Naive thymus-derived CD4-positive, alpha-beta T cell (primary cell): ENCODE measurements at regions of chr1 and their contacts with region 1.

Region 1: GRCh38 chr1:1019122-1019999 is 559 bp upstream of the AGRN start:
- DNase-seq: peak; percentile 69 to 90 (median 82)
- ATAC-seq: peak; percentile 93
- H3K4me3 ChIP-seq: peak overlapping the region; percentile 11
- H3K4me3 Mint-ChIP-seq: peak overlapping the region in 9 of 10 donors; percentile 48 to 80 (median 68)
- H3K27ac ChIP-seq: peak overlapping the region; percentile 27
- H3K27ac Mint-ChIP-seq: peak overlapping the region in 4 of 9 donors; percentile 40 to 65 (median 55)
- H3K4me1 ChIP-seq: peaks cover 4 to 10% of the 10 kb centered on the region in 2 donors
- H3K4me1 Mint-ChIP-seq: peaks cover 9 to 26% (median 15%) of the 10 kb centered on the region in 7 donors
- H3K27me3 ChIP-seq: no peaks in the 10 kb centered on the region
- H3K27me3 Mint-ChIP-seq: peaks cover 0 to 17% (median 0%) of the 10 kb centered on the region in 5 donors

Region 2: DNA sequence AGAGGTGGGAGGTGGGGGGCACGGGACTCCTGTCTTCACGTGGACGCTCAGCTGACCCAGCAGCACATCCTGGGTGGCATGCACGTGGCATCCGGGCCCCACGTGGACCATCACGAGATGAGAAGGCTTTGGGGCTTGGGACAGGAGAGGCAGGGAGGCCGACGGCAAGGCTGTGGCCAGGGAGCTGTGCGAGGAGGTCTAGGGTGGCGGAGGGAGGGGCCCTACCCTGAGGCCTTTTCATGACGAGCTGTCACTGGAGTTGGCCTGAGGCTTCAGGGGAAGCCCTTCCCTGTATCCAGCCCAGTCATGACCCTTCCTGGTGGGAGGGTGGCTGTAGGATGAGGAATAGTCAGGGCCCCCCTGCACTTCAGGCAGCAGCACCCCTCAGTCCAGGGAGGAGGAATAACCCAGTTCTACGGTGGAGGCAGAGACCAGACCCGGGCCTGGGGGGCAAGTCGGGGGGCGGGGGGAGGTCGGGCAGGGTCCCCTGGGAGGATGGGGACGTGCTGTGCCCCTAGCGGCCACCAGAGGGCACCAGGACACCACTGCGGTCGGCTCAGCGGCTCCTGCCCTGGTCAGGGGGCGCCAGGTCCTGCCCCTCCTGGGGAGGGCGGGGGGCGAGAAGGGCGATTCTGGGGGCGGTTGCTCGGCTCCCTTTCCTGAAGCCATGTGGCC is 35.4 kb before region 1 on chr1:
- CTCF ChIA-PET with region 1: interaction called, 6 read pairs
- POLR2A ChIA-PET with region 1: no interaction called
- intact Hi-C with region 1: loop called in 1 of 2 experiments (anchors 1 kb)
- DNase-seq: peak in 7 of 9 donors; percentile 47 to 71 (median 62)
- ATAC-seq: peak; percentile 85
- H3K4me3 ChIP-seq: no peak overlapping the region
- H3K4me3 Mint-ChIP-seq: no peak overlapping the region
- H3K27ac ChIP-seq: no peak overlapping the region
- H3K27ac Mint-ChIP-seq: no peak overlapping the region
- H3K4me1 ChIP-seq: no peaks in the 10 kb centered on the region
- H3K4me1 Mint-ChIP-seq: peaks cover 0 to 2% (median 0%) of the 10 kb centered on the region in 7 donors
- H3K27me3 ChIP-seq: no peaks in the 10 kb centered on the region
- H3K27me3 Mint-ChIP-seq: peaks cover 7 to 38% (median 26%) of the 10 kb centered on the region in 5 donors

Region 3: DNA sequence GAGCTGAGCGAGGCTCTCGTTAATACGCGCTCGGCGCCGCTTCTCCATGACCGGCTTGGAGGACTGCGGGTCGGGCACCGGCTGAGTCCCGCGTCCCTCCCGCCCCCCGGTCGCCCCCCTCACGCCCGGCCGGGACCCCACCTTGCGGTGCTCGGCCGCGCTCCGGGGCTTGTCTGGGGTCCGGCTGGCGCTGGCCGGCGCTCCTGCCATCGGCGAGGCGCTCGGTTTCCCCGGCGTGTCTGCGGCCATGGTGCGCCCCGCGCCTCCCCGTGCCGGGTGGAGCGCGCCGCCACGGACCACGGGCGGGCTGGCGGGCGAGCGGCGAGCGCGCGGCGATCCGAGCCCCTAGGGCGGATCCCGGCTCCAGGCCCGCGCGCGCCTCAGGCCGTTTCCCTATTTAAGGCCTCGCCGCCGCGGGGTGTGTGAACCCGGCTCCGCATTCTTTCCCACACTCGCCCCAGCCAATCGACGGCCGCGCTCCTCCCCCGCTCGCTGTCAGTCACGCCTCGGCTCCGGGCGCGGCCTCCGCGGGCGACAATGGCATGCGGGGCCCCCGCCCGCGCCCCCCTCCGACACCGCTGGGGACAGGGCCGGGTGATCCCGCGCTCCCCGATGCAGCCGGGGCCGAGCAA is 19.5 kb before region 1 on chr1 and contains the start of gene HES4:
- CTCF ChIA-PET with region 1: interaction called, 3 read pairs
- POLR2A ChIA-PET with region 1: interaction called, 10 read pairs
- intact Hi-C with region 1: loop called in 1 of 2 experiments (anchors 1 kb)
- DNase-seq: peak; percentile 44 to 76 (median 60)
- ATAC-seq: peak; percentile 67
- H3K4me3 ChIP-seq: peak within 1 kb of the TSS; percentile 42
- H3K4me3 Mint-ChIP-seq: peak within 1 kb of the TSS; percentile 64 to 87 (median 80)
- H3K27ac ChIP-seq: peak within 1 kb of the TSS; percentile 64
- H3K27ac Mint-ChIP-seq: peak within 1 kb of the TSS in 7 of 9 donors; percentile 46 to 96 (median 90)
- H3K4me1 ChIP-seq: peaks cover 12 to 18% of the 10 kb centered on the region in 2 donors
- H3K4me1 Mint-ChIP-seq: peaks cover 5 to 31% (median 12%) of the 10 kb centered on the region in 7 donors
- H3K27me3 ChIP-seq: peaks cover 3 to 15% of the 10 kb centered on the region in 2 donors
- H3K27me3 Mint-ChIP-seq: peaks cover 8 to 54% (median 17%) of the 10 kb centered on the region in 5 donors
- total RNA-seq, gene HES4: 0.22 to 35.0 (median 18.8) TPM in 3 of 5 experiments, not detected in the others

Region 4: GRCh38 chr1:1040004-1040991 is 20.9 kb after region 1 on chr1:
- CTCF ChIA-PET with region 1: interaction called, 5 read pairs
- POLR2A ChIA-PET with region 1: interaction called, 5 read pairs
- intact Hi-C with region 1: loop called (anchors 1 to 2 kb)
- DNase-seq: peak; percentile 69 to 84 (median 81)
- ATAC-seq: peak; percentile 93
- H3K4me3 ChIP-seq: peak overlapping the region; percentile 52
- H3K4me3 Mint-ChIP-seq: peak overlapping the region; percentile 71 to 86 (median 80)
- H3K27ac ChIP-seq: peak overlapping the region; percentile 35
- H3K27ac Mint-ChIP-seq: peak overlapping the region in 7 of 9 donors; percentile 25 to 56 (median 41)
- H3K4me1 ChIP-seq: peaks cover 6 to 14% of the 10 kb centered on the region in 2 donors
- H3K4me1 Mint-ChIP-seq: peaks cover 5 to 18% (median 15%) of the 10 kb centered on the region in 7 donors
- H3K27me3 ChIP-seq: no peaks in the 10 kb centered on the region
- H3K27me3 Mint-ChIP-seq: peaks cover 3 to 27% (median 5%) of the 10 kb centered on the region in 5 donors

Region 5: DNA sequence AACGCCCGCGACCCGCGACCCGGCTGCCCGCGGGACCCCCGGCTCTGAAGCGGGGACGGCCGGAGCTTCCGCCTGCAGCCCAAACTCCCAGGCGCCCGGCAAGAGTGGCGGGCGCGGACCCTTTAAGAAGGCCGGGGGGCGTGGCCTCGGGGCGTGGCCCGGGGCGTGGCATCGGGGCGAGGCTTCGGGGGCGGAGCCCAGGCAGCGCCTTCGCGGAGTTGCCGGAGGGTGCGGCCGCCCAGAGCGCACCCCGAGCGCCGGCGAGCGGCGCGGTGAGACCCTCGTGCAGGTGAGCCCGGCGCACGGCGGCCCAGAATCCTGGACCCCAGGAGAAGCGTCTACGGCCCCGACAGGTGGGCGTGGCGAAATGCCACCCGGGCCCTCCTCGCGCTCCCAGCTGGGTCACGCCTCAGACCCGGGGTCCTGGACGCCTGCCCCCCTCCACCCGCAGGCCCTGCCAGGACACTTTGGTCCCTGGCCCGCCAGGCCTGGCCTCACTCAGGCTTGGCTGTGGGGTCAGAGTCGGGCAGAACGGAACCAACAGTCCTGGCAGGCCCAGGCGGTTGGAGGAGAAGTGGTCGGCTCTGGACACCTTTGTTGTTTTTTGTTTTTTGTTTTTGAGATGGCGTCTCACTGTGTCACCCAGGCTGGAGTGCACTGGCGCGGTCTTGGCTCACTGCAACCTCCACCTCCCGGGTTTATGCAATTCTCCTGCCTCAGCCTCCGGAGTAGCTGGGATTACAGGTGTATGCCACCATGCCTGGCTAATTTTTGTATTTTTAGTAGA is 40.3 kb after region 1 on chr1:
- CTCF ChIA-PET with region 1: interaction called, 4 read pairs
- POLR2A ChIA-PET with region 1: interaction called, 6 read pairs
- intact Hi-C with region 1: loop called (anchors 1 kb)
- DNase-seq: peak; percentile 80 to 94 (median 87)
- ATAC-seq: peak; percentile 92
- H3K4me3 ChIP-seq: peak overlapping the region; percentile 43
- H3K4me3 Mint-ChIP-seq: peak overlapping the region in 8 of 10 donors; percentile 29 to 84 (median 52)
- H3K27ac ChIP-seq: no peak overlapping the region
- H3K27ac Mint-ChIP-seq: peak overlapping the region in 1 of 9 donors; percentile 38
- H3K4me1 ChIP-seq: peaks cover 4 to 22% of the 10 kb centered on the region in 2 donors
- H3K4me1 Mint-ChIP-seq: peaks cover 0 to 19% (median 5%) of the 10 kb centered on the region in 7 donors
- H3K27me3 ChIP-seq: peaks cover 3 to 16% of the 10 kb centered on the region in 2 donors
- H3K27me3 Mint-ChIP-seq: peaks cover 7 to 35% (median 13%) of the 10 kb centered on the region in 5 donors